Left cardiac atrium (tissue), 4 donors: ENCODE measurements at regions of chr18 and their contacts with region 1.

Region 1: DNA sequence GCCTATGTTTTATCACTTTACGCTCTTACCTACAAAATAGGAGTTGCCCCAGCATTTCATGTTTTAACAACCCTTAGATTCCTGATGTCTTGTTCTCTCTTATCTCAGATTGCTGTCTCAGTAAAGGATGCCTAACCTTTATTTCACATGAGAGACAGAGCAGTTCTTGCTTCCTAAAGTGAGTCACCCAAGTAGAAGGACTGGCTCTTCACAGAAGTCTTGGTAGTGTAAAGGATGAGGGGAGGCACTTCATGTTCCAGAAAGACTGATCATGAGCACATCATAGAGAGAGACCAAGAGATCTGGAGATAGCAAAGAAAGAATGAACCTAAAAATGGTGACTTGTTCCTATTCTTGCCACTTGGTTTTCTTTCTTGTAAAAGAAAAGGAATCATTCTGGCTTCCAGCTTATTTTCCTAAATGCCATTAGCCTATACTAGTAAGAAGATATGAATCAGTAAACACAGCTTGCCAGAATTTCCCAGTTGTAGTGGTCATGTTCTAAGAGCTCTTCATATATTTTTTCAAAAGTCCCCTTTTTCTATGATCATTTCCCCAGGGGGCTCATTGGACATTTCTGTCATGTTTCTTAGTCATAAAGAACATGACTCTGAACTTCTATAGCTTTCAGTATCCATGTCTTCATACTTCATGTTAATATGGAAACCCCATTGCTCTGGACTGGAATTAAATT is 54.9 kb downstream of the MAPRE2 start:
- DNase-seq: no peak
- ATAC-seq: no peak

Region 2: GRCh38 chr18:35040988-35041814 is 54.9 kb before region 1 on chr18 and contains the start of gene MAPRE2:
- intact Hi-C with region 1: loop called in 1 of 2 experiments (anchors 10 kb)
- DNase-seq: peak; percentile 100
- ATAC-seq: peak; percentile 99
- total RNA-seq, gene MAPRE2: 67.1 to 83.4 TPM

Region 3: DNA sequence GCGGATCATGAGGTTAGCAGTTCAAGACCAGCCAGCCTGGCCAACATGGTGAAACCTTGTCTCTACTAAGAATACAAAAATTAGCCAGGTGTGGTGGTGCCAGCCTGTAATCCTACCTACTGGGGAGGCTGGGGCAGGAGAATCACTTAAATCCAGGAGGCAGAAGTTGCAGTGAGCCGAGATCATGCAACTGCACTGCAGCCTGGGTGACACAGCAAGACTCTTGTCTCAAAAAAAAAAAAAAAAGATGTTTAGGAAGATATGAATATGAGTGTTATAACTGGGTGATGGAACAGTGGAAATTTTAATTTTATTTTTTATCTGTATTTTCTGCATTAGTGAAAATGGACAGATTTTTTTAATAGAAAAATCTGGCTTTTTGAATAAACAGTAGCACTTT is 40.4 kb before region 1 on chr18:
- intact Hi-C with region 1: no loop called
- DNase-seq: no peak
- ATAC-seq: no peak

Region 4: DNA sequence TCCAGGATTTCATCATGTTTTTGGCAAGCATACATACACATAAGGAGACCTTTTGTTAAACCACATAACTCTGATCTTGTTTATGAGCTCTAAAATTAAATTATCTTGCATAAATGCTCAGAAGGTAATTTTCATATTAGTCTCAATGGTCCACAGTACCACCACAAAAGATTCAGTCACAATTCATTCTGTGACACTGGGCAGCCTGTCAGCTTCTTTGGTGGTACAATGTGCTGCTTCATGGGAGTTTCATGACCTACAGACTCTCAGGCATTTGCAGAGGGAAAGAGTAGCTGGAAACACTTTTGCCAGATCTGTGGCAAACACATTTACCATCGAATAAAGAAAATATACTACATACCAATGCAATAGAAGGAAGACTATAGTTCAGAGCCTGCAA is 93.4 kb after region 1 on chr18:
- intact Hi-C with region 1: no loop called
- DNase-seq: no peak
- ATAC-seq: no peak

Region 5: GRCh38 chr18:35592298-35592697 is 496.2 kb after region 1 on chr18:
- intact Hi-C with region 1: no loop called
- DNase-seq: no peak
- ATAC-seq: no peak